Activated CD4-positive, alpha-beta T cell treated with anti-CD3 and anti-CD28 coated beads, Interleukin-2, amount 10 ng/mL, durations not matched to agents 24 days and 14 days (primary cell): ENCODE measurements at regions of chr6 and their contacts with region 1.

Region 1: DNA sequence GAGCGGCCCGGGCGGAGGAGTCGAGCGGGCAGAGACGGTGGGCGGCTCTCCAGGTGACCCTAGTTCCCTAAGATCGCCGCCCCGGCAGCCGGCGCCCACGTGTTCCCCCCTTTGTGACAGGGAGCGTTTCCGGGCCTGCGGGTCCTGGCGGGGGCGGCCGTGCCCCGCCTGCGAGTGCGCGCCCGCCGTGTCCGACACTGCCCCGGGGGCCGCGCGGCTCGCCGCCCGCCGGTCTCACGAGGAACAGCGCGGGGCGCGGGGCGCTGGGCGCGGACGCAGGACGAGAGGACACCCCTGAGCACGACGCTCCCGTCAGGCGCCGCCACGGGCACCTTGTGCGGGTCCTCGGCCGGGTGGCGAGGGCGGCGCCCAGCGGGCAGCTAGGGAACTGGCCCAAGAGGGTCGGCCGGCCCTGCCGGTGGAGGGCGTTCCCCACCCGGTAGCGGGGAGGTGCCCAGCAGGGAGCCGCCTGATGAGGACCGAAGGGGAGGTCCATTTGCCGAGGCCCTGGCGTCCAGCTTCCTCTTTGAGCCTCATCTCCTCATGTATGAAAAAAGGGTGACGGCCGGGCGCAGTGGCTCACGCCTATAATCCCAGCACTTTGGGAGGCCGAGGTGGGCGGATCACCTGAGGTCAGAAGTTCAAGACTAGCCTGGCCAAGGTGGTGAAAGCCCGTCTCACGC is at the start of gene VARS1:
- DNase-seq: peak; percentile 96
- H3K4me3 Mint-ChIP-seq: peak within 1 kb of the TSS; percentile 86
- H3K27ac Mint-ChIP-seq: peak within 1 kb of the TSS; percentile 97
- H3K4me1 Mint-ChIP-seq: peaks cover 34% of the 10 kb centered on the region
- H3K27me3 Mint-ChIP-seq: no peaks in the 10 kb centered on the region
- total RNA-seq, gene VARS1: 173 and 181 TPM in 2 replicates

Region 2: GRCh38 chr6:31729515-31729978 is 66.2 kb before region 1 on chr6:
- intact Hi-C with region 1: loop called (anchors 2 kb)
- DNase-seq: peak; percentile 93
- H3K4me3 Mint-ChIP-seq: peak overlapping the region; percentile 97
- H3K27ac Mint-ChIP-seq: peak overlapping the region; percentile 74
- H3K4me1 Mint-ChIP-seq: peaks cover 64% of the 10 kb centered on the region
- H3K27me3 Mint-ChIP-seq: no peaks in the 10 kb centered on the region

Region 3: GRCh38 chr6:31776989-31777666 is 18.6 kb before region 1 on chr6 and contains the start of gene VWA7:
- intact Hi-C with region 1: loop called (anchors 1 kb)
- DNase-seq: peak; percentile 90
- H3K4me3 Mint-ChIP-seq: peak within 1 kb of the TSS; percentile 66
- H3K27ac Mint-ChIP-seq: peak within 1 kb of the TSS; percentile 89
- H3K4me1 Mint-ChIP-seq: peaks cover 33% of the 10 kb centered on the region
- H3K27me3 Mint-ChIP-seq: no peaks in the 10 kb centered on the region
- total RNA-seq, gene VWA7: 3.0 and 3.2 TPM in 2 replicates

Region 4: DNA sequence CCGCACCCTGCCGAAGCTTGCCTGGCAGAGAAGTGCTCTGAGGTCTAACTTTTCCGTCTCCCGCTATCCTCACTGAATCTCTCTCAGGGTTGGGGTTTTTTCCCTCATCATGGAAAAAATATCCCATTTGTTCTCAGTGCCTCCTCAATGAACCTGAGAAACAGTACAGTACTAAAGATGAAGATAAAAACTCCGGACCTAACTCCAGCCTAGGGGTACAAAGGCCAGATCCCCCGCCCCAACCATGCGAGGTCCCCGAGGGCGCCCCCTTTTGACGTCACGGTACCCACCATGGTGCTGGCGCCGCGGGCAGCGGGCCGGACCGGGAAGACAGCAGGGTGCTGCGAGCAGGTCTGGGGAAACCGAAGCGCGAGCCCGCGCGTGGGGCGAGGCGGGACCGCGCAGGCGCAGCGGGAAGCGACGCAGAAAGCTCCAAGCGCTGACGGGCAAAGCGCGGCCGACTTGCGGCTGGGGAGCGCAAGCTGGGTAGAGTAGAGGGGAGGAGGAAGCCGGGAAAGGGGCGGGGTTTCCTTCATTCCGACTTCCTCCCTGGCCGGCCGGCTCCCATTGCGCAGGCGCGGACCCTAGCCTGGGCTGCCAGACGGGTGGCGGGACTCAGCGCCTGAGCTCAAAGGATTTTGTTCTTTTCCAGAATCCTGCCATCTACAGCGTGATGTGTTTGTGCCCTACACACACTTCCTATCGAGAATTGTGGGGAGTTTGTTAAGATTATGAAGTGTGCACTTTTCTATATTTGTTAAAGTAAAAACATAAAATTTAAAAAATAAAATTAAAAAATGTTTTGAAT is 10.9 kb after region 1 on chr6 and contains the start of gene LSM2:
- intact Hi-C with region 1: loop called (anchors 1 kb)
- DNase-seq: peak; percentile 99
- H3K4me3 Mint-ChIP-seq: peak within 1 kb of the TSS; percentile 91
- H3K27ac Mint-ChIP-seq: peak within 1 kb of the TSS; percentile 94
- H3K4me1 Mint-ChIP-seq: peaks cover 21% of the 10 kb centered on the region
- H3K27me3 Mint-ChIP-seq: no peaks in the 10 kb centered on the region
- total RNA-seq, gene LSM2: 142 and 146 TPM in 2 replicates

Region 5: GRCh38 chr6:31815025-31815838 is 19.5 kb after region 1 on chr6 and contains the starts of genes HSPA1A and HSPA1L:
- intact Hi-C with region 1: loop called (anchors 2 kb)
- DNase-seq: peak; percentile 93
- H3K4me3 Mint-ChIP-seq: peak within 1 kb of the TSS; percentile 97
- H3K27ac Mint-ChIP-seq: peak within 1 kb of the TSS; percentile 97
- H3K4me1 Mint-ChIP-seq: peaks cover 50% of the 10 kb centered on the region
- H3K27me3 Mint-ChIP-seq: no peaks in the 10 kb centered on the region
- total RNA-seq, gene HSPA1A: 189 and 190 TPM in 2 replicates
- total RNA-seq, gene HSPA1L: 1.8 and 2.5 TPM in 2 replicates

Region 6: GRCh38 chr6:31827286-31828079 is 31.7 kb after region 1 on chr6 and contains the start of gene HSPA1B:
- intact Hi-C with region 1: loop called (anchors 2 kb)
- DNase-seq: peak; percentile 98
- H3K4me3 Mint-ChIP-seq: peak within 1 kb of the TSS; percentile 87
- H3K27ac Mint-ChIP-seq: peak within 1 kb of the TSS; percentile 93
- H3K4me1 Mint-ChIP-seq: peaks cover 37% of the 10 kb centered on the region
- H3K27me3 Mint-ChIP-seq: no peaks in the 10 kb centered on the region
- total RNA-seq, gene HSPA1B: 156 and 161 TPM in 2 replicates